HepG2 (cell line): ENCODE measurements at regions of chr12 and their contacts with region 1.

Region 1: GRCh38 chr12:95003213-95003920 is at the start of gene NDUFA12:
- DNase-seq: peak; percentile 92
- ATAC-seq: peak; percentile 100
- H3K4me3 ChIP-seq: peak within 1 kb of the TSS; percentile 76 to 89 (median 84)
- H3K27ac ChIP-seq: peak within 1 kb of the TSS; percentile 77
- H3K4me1 ChIP-seq: peaks cover 41% of the 10 kb centered on the region
- H3K27me3 ChIP-seq: no peaks in the 10 kb centered on the region; a peak in 1 of 5 replicates
- CTCF ChIP-seq: peak; percentile 33
- EP300 ChIP-seq: 0 out of 4 replicates have a peak, but pooled peaks of 1 of the 2 experiments have one; percentile 33
- POLR2A ChIP-seq: peak; percentile 90 to 92
- RAD21 ChIP-seq: peak; percentile 41
- total RNA-seq, gene NDUFA12: 173 and 223 TPM in 2 replicates

Region 2: DNA sequence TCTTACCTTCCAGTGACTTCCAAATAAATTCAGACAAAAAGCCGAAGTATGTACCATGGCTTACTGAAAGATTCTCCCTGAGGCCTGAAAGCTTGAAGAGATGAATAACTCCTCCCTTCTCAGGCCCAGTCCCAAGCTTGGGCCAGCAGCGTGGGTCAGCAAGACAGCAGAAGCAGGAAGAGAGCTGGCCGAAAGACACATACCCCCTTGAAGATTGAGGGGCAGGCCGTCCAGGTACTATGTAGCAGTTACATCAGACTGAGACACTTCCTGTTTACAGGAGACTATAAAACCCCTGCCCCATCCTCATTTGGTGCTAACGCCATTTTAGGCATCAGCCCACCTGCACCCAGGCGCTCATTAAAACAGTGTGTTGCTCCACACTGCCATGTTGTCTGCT is 14.9 kb before region 1 on chr12:
- CTCF ChIA-PET with region 1: no interaction called
- POLR2A ChIA-PET with region 1: interaction called, 11 read pairs
- in situ Hi-C with region 1: no loop called
- intact Hi-C with region 1: no loop called
- DNase-seq: no peak
- ATAC-seq: no peak
- H3K4me3 ChIP-seq: no peak overlapping the region
- H3K27ac ChIP-seq: no peak overlapping the region
- H3K4me1 ChIP-seq: no peaks in the 10 kb centered on the region
- H3K27me3 ChIP-seq: no peaks in the 10 kb centered on the region
- CTCF ChIP-seq: no peak
- EP300 ChIP-seq: no peak
- POLR2A ChIP-seq: no peak
- RAD21 ChIP-seq: no peak

Region 3: DNA sequence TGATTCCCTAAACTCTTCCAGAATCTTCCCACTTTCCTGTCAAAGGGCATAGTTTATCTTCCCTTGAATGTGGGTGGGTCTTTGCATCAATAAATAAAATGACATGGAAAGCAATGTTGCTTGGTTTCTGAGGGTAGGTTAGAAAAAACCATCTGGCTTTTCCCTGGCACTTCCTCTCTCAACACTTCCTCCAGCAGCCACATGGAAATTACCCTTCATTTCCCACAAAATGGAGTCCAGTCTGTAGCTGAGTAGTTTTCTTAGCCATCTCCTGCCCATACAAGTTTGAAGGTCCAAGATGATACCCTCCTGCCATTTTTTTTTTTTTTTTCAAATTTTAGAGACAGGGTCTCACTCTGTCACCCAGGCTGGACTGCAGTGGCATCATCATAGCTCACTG is 11.2 kb after region 1 on chr12:
- CTCF ChIA-PET with region 1: no interaction called
- POLR2A ChIA-PET with region 1: interaction called, 10 read pairs
- in situ Hi-C with region 1: no loop called
- intact Hi-C with region 1: no loop called
- DNase-seq: no peak
- ATAC-seq: no peak
- H3K4me3 ChIP-seq: no peak overlapping the region
- H3K27ac ChIP-seq: no peak overlapping the region
- H3K4me1 ChIP-seq: no peaks in the 10 kb centered on the region
- H3K27me3 ChIP-seq: no peaks in the 10 kb centered on the region
- CTCF ChIP-seq: no peak
- EP300 ChIP-seq: no peak
- POLR2A ChIP-seq: no peak
- RAD21 ChIP-seq: no peak

Region 4: DNA sequence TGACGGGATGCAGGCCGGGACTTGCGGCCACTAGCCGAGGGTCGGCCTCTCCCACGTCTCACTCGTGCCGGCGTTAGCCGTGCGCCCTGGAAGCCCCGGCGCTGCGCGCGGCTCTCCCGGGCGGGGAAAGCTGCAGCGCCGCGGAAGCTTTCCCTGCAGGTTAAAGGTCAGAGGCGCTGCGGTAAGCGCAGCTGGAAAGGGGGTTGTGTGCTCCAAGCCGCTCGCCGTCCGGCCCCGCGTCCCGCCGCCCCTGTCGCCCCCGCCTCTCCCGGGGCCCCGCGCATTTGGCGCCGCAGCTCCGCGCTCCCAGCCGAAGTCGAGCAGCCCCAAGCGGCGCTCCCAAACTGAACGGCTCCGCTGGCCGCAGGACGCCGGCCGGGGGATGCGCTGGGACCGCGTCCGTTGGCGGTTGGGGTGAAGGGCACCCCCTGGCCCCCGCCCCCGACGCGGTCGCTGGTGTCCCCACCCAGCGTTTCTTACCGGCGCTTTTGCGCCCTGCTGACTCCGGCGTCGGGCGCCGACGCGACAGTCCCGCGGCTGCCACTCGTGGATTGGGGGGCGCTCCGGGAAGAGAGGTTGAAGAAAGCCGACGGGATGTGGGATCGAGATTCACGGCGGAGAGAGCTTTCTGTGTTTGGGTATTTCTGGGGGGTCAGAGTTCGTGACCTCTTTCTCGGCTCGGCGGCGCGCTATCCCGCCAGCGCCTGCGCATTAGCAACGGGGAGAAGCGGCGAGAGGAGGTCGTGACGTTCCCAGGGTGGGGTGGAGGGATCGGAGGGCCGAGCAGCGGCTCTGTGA is 69.7 kb after region 1 on chr12 and contains the start of gene NR2C1:
- CTCF ChIA-PET with region 1: no interaction called
- POLR2A ChIA-PET with region 1: interaction called, 11 read pairs
- in situ Hi-C with region 1: no loop called
- intact Hi-C with region 1: no loop called
- DNase-seq: peak; percentile 93
- ATAC-seq: peak; percentile 93
- H3K4me3 ChIP-seq: peak within 1 kb of the TSS; percentile 91 to 96 (median 95)
- H3K27ac ChIP-seq: peak within 1 kb of the TSS; percentile 90
- H3K4me1 ChIP-seq: peaks cover 42% of the 10 kb centered on the region
- H3K27me3 ChIP-seq: no peaks in the 10 kb centered on the region; a peak in 1 of 5 replicates
- CTCF ChIP-seq: peak; percentile 92
- EP300 ChIP-seq: 0 out of 4 replicates have a peak, but pooled peaks of 1 of the 2 experiments have one; percentile 8
- POLR2A ChIP-seq: peak; percentile 65 to 66
- RAD21 ChIP-seq: 0 out of 2 replicates have a peak, but pooled peaks have one; percentile 13
- total RNA-seq, gene NR2C1: 22.4 and 38.0 TPM in 2 replicates